Activated T-helper 1 cell treated with anti-CD3 and anti-CD28 coated beads, Interleukin-12 subunit alpha, Interleukin-12 subunit beta, Interleukin-2, Interleukin-4 antibody, amounts not matched to agents 30 ng/mL and 10 ng/mL and 1 ng/mL, durations not matched to agents 14 hours and 24 hours and 36 hours (primary cell): ENCODE measurements at regions of chr20 and their contacts with region 1.

Region 1: GRCh38 chr20:45293041-45294002 is 13.3 kb upstream of the RBPJL start:
- DNase-seq: peak; percentile 78
- H3K4me3 Mint-ChIP-seq: peak overlapping the region; percentile 76
- H3K27ac Mint-ChIP-seq: no peak overlapping the region
- H3K4me1 Mint-ChIP-seq: peaks cover 5% of the 10 kb centered on the region
- H3K27me3 Mint-ChIP-seq: peaks cover 22% of the 10 kb centered on the region

Region 2: GRCh38 chr20:44683263-44684046 is 609.9 kb before region 1 on chr20:
- intact Hi-C with region 1: loop called (anchors 10 kb)
- DNase-seq: peak; percentile 25
- H3K4me3 Mint-ChIP-seq: no peak overlapping the region
- H3K27ac Mint-ChIP-seq: no peak overlapping the region
- H3K4me1 Mint-ChIP-seq: peaks cover 17% of the 10 kb centered on the region
- H3K27me3 Mint-ChIP-seq: no peaks in the 10 kb centered on the region

Region 3: GRCh38 chr20:44909872-44910689 is 383.2 kb before region 1 on chr20 and contains the start of gene PABPC1L:
- intact Hi-C with region 1: loop called (anchors 10 kb)
- DNase-seq: peak; percentile 72
- H3K4me3 Mint-ChIP-seq: peak within 1 kb of the TSS; percentile 87
- H3K27ac Mint-ChIP-seq: peak within 1 kb of the TSS; percentile 84
- H3K4me1 Mint-ChIP-seq: peaks cover 32% of the 10 kb centered on the region
- H3K27me3 Mint-ChIP-seq: no peaks in the 10 kb centered on the region
- total RNA-seq, gene PABPC1L: 101 and 106 TPM in 2 replicates

Region 4: GRCh38 chr20:45044084-45044573 is 249.2 kb before region 1 on chr20:
- intact Hi-C with region 1: loop called (anchors 1 kb)
- DNase-seq: peak; percentile 21
- H3K4me3 Mint-ChIP-seq: no peak overlapping the region
- H3K27ac Mint-ChIP-seq: peak overlapping the region; percentile 58
- H3K4me1 Mint-ChIP-seq: peaks cover 49% of the 10 kb centered on the region
- H3K27me3 Mint-ChIP-seq: no peaks in the 10 kb centered on the region

Region 5: DNA sequence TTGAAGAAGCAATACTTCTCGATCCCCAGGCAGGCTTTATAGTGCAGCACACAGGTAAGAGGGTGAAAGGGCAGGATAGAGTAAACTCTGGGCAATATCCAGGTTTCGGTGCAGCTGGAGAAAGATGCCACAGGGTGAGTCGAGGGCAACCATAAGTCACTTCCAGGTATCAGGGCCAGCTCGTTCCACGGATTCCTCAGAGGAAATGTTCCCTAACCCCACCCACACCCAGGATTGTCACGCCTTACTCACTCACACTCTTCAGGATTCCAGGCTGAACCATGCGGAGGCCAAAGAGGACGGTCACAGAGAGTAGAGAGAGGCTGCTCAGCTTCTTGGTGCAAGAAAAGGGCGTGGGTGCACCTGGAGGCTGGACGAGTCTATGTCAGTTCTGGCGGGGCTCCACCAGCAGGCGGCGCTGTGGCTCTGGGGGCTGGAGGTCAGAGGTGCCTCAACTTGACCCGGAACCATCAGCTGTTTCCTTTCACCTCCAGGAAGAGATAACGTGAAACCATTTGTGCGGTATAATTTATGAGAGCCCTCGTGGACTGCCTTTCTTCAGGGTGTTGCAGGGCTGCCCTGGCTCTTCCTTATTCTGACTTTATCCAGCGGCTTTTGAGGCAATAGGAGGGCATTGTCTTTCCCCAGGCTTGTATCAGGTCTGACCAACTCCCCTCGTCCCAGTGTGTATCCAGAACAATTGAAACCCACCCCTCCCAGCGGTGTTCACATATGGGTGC is 154.6 kb before region 1 on chr20:
- intact Hi-C with region 1: loop called (anchors 1 kb)
- DNase-seq: peak; percentile 46
- H3K4me3 Mint-ChIP-seq: no peak overlapping the region
- H3K27ac Mint-ChIP-seq: no peak overlapping the region
- H3K4me1 Mint-ChIP-seq: no peaks in the 10 kb centered on the region
- H3K27me3 Mint-ChIP-seq: peaks cover 10% of the 10 kb centered on the region

Region 6: GRCh38 chr20:45311589-45312211 is 18.4 kb after region 1 on chr20:
- intact Hi-C with region 1: loop called (anchors 2 kb)
- DNase-seq: peak; percentile 63
- H3K4me3 Mint-ChIP-seq: no peak overlapping the region
- H3K27ac Mint-ChIP-seq: no peak overlapping the region
- H3K4me1 Mint-ChIP-seq: peaks cover 27% of the 10 kb centered on the region
- H3K27me3 Mint-ChIP-seq: peaks cover 5% of the 10 kb centered on the region